ENCODE measurements at regions of chr14 and their contacts with region 1.

Region 1: DNA sequence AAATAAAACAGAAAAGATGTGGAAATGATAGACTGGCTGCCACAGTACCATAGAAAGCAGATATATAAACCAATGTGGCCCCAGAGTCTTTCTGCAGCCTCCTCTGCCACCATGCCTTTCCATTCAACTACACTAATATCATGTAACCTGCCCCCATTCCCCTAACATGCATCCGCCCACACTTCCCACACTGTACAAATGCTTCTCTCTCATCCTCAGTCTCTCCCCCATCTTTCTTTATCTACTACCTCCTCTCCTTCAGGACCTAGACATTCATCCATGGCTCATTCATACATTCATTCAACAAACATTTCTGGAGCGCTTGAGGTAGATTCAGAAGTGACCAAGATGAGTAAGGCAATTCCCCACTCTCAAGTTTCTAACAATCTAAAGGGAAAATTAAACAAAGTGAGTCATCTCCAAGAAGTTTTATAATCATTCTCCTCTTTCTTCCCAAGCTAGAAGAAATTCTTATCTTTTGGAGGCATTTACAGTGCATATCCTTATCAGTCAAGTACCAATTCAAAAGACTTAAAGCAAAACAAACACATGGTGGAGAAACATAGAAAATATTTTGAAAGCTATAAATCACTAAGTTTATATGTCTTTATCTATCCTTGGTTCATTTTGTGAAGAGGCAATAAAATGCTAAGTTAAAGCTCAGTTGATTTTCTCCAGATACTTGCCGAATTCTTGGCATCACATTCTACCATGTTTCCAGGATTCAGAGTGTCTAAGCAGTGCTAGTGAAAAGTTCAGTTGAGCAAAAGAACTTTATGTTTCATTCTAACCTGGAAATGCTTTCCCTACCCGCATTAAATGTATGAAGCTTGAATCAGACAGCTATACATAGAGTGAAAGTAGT is 70.5 kb upstream of the FRMD6 start:
- DNase-seq: peak; percentile 61
- H3K4me3 ChIP-seq: no peak overlapping the region
- CTCF ChIP-seq: no peak

Region 2: DNA sequence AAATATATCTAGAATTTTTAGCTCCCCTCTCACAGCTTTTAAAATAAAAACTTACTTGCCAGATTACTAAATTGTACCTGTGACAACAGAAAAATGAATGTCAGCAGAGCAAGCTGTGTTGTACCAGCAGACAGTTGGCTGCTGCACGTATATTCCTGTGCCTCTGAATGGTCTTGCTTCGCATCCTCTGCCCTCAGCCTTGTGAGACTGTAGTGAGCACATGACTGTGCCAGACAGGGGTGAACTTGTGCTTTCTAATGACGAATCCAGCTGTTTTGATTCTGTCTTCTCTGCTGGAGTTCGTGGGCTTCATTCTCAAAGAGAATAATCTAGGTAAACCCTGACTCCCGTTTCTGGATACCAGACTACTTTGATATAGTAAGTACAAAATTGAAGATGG is 12.1 kb after region 1 on chr14:
- CTCF ChIA-PET with region 1: interaction called, 12 read pairs
- POLR2A ChIA-PET with region 1: interaction called, 14 read pairs
- DNase-seq: no peak
- H3K4me3 ChIP-seq: no peak overlapping the region
- CTCF ChIP-seq: no peak

Measured in AG04449 (cell line).